ENCODE measurements at regions of chrX and their contacts with region 1.

Region 1: DNA sequence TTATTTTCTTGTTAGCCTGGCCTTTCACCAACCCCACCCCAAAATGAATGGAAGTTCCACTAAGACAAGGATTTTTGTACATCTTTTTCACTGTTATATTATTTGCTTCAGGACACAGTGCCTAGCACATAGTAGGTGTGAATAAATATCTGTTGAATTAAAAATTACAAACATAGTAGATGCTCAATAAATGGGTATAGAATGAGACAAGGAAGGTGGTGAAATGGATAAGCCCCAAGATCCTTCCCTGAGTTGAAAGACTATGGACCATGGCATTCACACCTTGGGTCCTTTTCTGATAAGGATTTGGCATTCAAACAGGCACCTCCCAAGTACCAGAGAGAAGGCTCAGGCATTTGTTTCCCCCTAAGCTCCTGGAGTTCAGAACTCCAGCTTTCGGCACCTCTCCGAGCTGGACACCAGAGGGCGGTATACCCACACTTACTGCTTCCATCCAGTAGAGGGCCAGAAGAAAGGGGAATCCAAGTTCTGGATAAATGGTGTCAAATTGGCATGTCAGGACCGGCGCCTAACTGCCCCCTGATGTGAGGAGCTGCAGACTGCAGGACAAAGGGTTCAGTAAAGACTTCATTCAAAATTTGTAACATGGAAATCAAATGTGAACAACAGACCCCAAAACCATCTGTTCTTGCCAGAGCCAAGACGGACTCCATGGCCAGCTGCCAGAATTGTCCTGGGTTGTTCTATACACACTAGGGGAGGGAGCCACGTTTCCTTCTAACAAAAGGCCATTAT is 193.0 kb downstream of the GPC3 start:
- DNase-seq: peak; percentile 78
- H3K4me3 ChIP-seq: peak overlapping the region in 1 of 4 donors; percentile 33
- H3K27ac ChIP-seq: no peak overlapping the region
- H3K4me1 ChIP-seq: peaks cover 0 to 14% (median 0%) of the 10 kb centered on the region in 4 donors
- H3K27me3 ChIP-seq: no peaks in the 10 kb centered on the region
- CTCF ChIP-seq: peak; percentile 53 to 89 (median 79)
- EP300 ChIP-seq: no peak
- POLR2A ChIP-seq: no peak

Region 2: DNA sequence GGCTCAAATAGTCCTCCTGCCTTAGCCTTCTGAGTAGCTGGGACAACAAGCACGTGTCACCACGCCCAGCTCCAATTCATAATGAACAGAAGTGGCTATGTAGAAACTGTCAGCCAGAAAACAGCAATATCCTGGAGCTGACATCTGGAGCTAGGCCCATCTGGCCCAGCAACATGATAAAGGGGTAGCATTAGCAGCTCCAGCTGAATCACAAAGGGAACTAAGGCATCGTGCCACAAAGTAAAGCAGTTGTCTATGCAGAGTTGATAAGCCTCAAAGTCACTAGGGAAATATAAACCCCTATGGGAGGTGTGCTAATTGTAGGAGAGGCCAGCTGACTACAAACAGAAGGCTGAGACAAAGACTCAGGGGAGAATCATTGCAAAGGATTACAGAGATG is 106.6 kb before region 1 on chrX:
- intact Hi-C with region 1: no loop called
- DNase-seq: no peak
- H3K4me3 ChIP-seq: no peak overlapping the region
- H3K27ac ChIP-seq: no peak overlapping the region
- H3K4me1 ChIP-seq: no peaks in the 10 kb centered on the region
- H3K27me3 ChIP-seq: no peaks in the 10 kb centered on the region
- CTCF ChIP-seq: no peak
- EP300 ChIP-seq: no peak
- POLR2A ChIP-seq: no peak

Region 3: GRCh38 chrX:133745349-133745748 is 47.0 kb before region 1 on chrX:
- intact Hi-C with region 1: no loop called
- DNase-seq: no peak
- H3K4me3 ChIP-seq: no peak overlapping the region
- H3K27ac ChIP-seq: no peak overlapping the region
- H3K4me1 ChIP-seq: no peaks in the 10 kb centered on the region
- H3K27me3 ChIP-seq: no peaks in the 10 kb centered on the region
- CTCF ChIP-seq: no peak
- EP300 ChIP-seq: no peak
- POLR2A ChIP-seq: no peak

Region 4: GRCh38 chrX:134026565-134027311 is 234.4 kb after region 1 on chrX:
- intact Hi-C with region 1: loop called (anchors 2 kb)
- DNase-seq: peak; percentile 64
- H3K4me3 ChIP-seq: peak overlapping the region in 2 of 4 donors; percentile 12 to 13
- H3K27ac ChIP-seq: no peak overlapping the region
- H3K4me1 ChIP-seq: no peaks in the 10 kb centered on the region
- H3K27me3 ChIP-seq: no peaks in the 10 kb centered on the region
- CTCF ChIP-seq: peak in 3 of 4 experiments; percentile 25 to 38 (median 36)
- EP300 ChIP-seq: no peak
- POLR2A ChIP-seq: no peak

Region 5: GRCh38 chrX:134171661-134172587 is 379.5 kb after region 1 on chrX:
- intact Hi-C with region 1: loop called (anchors 2 kb)
- DNase-seq: no peak
- H3K4me3 ChIP-seq: peak overlapping the region; percentile 37 to 59 (median 54)
- H3K27ac ChIP-seq: peak overlapping the region in 3 of 4 donors; percentile 67 to 75 (median 71)
- H3K4me1 ChIP-seq: peaks cover 0 to 5% (median 0%) of the 10 kb centered on the region in 4 donors
- H3K27me3 ChIP-seq: no peaks in the 10 kb centered on the region
- CTCF ChIP-seq: no peak
- EP300 ChIP-seq: no peak
- POLR2A ChIP-seq: no peak

Region 6: DNA sequence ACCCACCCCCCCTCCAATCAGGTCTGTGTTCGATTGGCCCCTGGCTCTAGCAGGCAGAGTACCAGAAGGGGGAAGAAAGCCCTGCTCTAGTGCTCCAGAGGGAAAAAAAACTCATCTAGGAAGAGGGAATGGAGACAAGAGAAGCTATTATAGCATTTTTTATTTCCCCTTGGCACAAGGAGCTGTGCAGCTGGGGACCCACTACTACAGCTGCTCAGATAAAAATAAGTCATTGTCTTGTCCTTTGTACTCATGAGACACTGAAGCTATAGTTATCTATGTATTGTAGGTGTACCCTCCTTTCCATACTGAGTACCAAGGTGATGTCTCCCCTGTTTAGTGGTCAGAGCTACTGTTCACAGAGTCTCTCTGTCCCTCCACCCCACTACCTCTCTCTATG is 458.9 kb after region 1 on chrX:
- intact Hi-C with region 1: loop called (anchors 10 kb)
- DNase-seq: no peak
- H3K4me3 ChIP-seq: no peak overlapping the region
- H3K27ac ChIP-seq: no peak overlapping the region
- H3K4me1 ChIP-seq: no peaks in the 10 kb centered on the region
- H3K27me3 ChIP-seq: no peaks in the 10 kb centered on the region
- CTCF ChIP-seq: no peak
- EP300 ChIP-seq: no peak
- POLR2A ChIP-seq: no peak

Region 7: GRCh38 chrX:134396174-134396573 is 603.8 kb after region 1 on chrX:
- intact Hi-C with region 1: loop called (anchors 2 kb)
- DNase-seq: no peak
- H3K4me3 ChIP-seq: no peak overlapping the region
- H3K27ac ChIP-seq: no peak overlapping the region
- H3K4me1 ChIP-seq: no peaks in the 10 kb centered on the region
- H3K27me3 ChIP-seq: no peaks in the 10 kb centered on the region
- CTCF ChIP-seq: peak in 3 of 4 experiments; percentile 28 to 64 (median 48)
- EP300 ChIP-seq: no peak
- POLR2A ChIP-seq: no peak

Measured in sigmoid colon (tissue), 7 donors.